T-cell (primary cell): ENCODE measurements at regions of chr9 and their contacts with region 1.

Region 1: DNA sequence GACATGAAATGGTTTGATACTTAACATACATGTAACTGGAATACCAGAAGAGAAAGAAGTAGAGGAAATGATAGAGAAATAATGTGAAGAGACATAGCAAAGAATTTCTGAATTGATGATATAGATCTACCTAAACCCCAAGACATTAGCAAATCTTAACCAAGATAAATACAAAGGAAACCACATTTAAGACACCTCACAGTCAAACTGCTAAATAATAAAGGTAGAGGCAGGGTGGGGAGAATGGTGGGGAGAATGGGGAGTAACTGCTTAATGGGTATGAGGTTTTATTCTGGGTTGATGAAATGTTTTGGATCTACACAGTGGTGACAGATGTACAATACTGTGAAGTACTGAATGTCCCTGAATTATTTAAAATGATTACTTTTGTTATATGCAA is 17.5 kb downstream of the CARNMT1 start:
- DNase-seq: peak in 1 of 35 experiments; percentile 13
- ATAC-seq: peak; percentile 42 to 71 (median 56)
- H3K4me3 ChIP-seq: no peak overlapping the region
- H3K4me3 Mint-ChIP-seq: no peak overlapping the region
- H3K27ac ChIP-seq: no peak overlapping the region
- H3K27ac Mint-ChIP-seq: peak overlapping the region in 1 of 2 donors; percentile 35
- H3K4me1 ChIP-seq: peaks cover 8 to 15% of the 10 kb centered on the region in 2 experiments
- H3K4me1 Mint-ChIP-seq: peaks cover 31 to 33% (median 31%) of the 10 kb centered on the region in 3 donors
- H3K27me3 ChIP-seq: no peaks in the 10 kb centered on the region
- H3K27me3 Mint-ChIP-seq: no peaks in the 10 kb centered on the region

Region 2: GRCh38 chr9:75033791-75034473 is 23.4 kb after region 1 on chr9:
- CTCF ChIA-PET with region 1: interaction called, 9 to 22 read pairs
- POLR2A ChIA-PET with region 1: interaction called in 1 of 2 experiments, 3 read pairs
- DNase-seq: no peak
- ATAC-seq: no peak
- H3K4me3 ChIP-seq: no peak overlapping the region
- H3K4me3 Mint-ChIP-seq: no peak overlapping the region
- H3K27ac ChIP-seq: no peak overlapping the region
- H3K27ac Mint-ChIP-seq: no peak overlapping the region
- H3K4me1 ChIP-seq: peaks cover 0 to 3% of the 10 kb centered on the region in 2 experiments
- H3K4me1 Mint-ChIP-seq: peaks cover 0 to 1% (median 0%) of the 10 kb centered on the region in 3 donors
- H3K27me3 ChIP-seq: peaks cover 0 to 2% of the 10 kb centered on the region in 2 experiments
- H3K27me3 Mint-ChIP-seq: peaks cover 0 to 3% of the 10 kb centered on the region in 2 donors

Region 3: DNA sequence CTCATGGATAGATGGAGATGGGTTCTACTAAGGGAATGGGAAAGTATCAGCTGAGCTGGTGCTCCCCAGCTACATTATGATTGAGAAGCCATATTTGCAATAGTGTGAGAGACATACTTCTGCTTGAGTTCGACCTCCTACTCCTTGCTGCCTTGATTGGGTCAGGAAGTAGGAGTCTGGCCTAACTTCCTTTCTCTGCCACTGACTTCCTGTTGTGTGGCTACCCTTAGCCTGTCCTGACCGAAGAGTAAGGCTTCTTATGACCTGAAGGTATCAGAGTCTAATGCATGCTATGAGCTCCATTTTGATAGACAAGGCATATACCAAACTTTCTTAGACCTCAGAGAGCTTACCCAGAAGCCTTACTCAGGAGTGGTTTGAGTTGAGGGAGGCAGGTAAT is 131.6 kb after region 1 on chr9:
- CTCF ChIA-PET with region 1: interaction called in 1 of 2 experiments, 10 read pairs
- POLR2A ChIA-PET with region 1: no interaction called
- DNase-seq: peak in 1 of 35 experiments; percentile 42
- ATAC-seq: peak in 3 of 4 experiments; percentile 31 to 49 (median 48)
- H3K4me3 ChIP-seq: no peak overlapping the region
- H3K4me3 Mint-ChIP-seq: peak overlapping the region in 2 of 3 donors; percentile 41 to 50
- H3K27ac ChIP-seq: peak overlapping the region; percentile 46
- H3K27ac Mint-ChIP-seq: peak overlapping the region; percentile 82 to 88
- H3K4me1 ChIP-seq: peaks cover 32 to 53% of the 10 kb centered on the region in 2 experiments
- H3K4me1 Mint-ChIP-seq: peaks cover 74 to 86% (median 80%) of the 10 kb centered on the region in 3 donors
- H3K27me3 ChIP-seq: no peaks in the 10 kb centered on the region
- H3K27me3 Mint-ChIP-seq: no peaks in the 10 kb centered on the region